WTC11 (cell line): ENCODE measurements at regions of chr9 and their contacts with region 1.

Region 1: DNA sequence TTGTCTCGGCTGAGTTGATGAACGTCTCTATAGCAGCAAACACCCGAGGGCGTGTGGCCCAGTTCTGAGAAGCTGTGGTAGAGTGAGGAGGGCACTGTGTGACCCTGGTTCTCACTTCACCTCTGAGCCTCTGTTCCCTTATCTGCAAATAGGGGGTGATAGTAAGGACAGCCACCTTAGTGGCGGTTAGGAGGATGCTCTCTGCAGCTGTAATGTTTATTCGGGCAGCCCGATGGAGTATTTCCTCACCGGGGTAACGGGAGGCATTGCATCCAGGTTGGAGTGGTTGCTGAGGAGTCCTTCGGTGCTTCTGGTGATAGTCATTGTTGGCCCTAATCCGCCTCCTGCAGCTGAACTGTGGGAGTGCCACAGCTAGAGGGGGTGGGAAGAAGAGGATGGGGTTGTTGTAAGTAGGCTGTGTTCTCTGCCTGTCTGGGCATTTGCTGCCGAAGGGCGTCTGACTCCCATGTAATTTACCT is 13.9 kb downstream of the PRRC2B start:
- DNase-seq: peak; percentile 67
- ATAC-seq: peak; percentile 68
- H3K4me3 Mint-ChIP-seq: peak overlapping the region; percentile 51
- H3K27ac Mint-ChIP-seq: peak overlapping the region; percentile 99
- H3K4me1 Mint-ChIP-seq: peaks cover 87% of the 10 kb centered on the region
- H3K27me3 Mint-ChIP-seq: no peaks in the 10 kb centered on the region
- CTCF ChIP-seq: no peak

Region 2: GRCh38 chr9:131160416-131161112 is 247.2 kb before region 1 on chr9:
- CTCF ChIA-PET with region 1: no interaction called
- POLR2A ChIA-PET with region 1: no interaction called
- DNase-seq: no peak
- ATAC-seq: no peak
- H3K4me3 Mint-ChIP-seq: no peak overlapping the region
- H3K27ac Mint-ChIP-seq: no peak overlapping the region
- H3K4me1 Mint-ChIP-seq: no peaks in the 10 kb centered on the region
- H3K27me3 Mint-ChIP-seq: no peaks in the 10 kb centered on the region
- CTCF ChIP-seq: no peak

Region 3: DNA sequence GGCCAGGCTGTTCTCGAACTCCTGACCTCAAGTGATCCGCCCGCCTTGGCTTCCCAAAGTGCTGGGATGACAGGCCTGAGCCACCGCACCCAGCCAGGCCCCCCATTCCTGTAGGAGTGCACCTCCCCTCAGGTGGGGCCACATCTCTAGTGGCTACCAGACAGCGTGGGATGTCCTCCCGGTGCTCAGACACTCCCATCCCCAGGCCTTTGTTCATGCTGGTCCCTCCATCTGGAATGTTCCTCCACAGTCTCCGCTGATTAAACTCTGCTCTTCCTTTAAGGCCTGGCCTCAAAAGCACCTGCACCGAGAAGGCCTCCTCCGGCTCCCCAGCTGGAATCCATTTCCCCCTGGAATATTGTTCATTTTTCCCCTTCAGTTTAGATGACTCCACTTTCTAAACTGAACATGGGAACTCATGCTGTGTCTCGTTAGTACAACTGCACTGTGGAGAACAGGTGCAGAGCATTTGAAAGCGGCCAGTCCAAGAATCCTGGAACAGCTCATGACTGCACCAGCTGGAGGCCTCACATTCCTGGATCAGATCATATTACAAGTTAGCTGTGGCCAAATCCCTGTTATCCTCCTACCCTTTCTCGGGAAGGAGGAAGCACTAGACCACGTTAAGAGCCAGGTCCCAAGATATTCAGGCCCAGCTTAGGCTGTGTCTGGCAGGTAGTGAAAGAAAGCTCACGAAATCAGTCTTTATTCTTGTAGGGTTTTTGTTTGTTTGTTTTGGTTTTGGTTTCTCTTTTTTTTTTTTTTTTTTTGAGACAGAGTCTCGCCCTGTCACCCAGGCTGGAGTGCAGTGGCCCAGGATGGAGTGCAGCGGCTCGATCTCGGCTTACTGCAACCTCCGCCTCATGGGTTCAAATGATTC is 24.7 kb before region 1 on chr9:
- CTCF ChIA-PET with region 1: interaction called, 10 read pairs
- POLR2A ChIA-PET with region 1: interaction called, 3 read pairs
- DNase-seq: peak; percentile 68
- ATAC-seq: peak; percentile 97
- H3K4me3 Mint-ChIP-seq: peak overlapping the region; percentile 18
- H3K27ac Mint-ChIP-seq: peak overlapping the region; percentile 97
- H3K4me1 Mint-ChIP-seq: peaks cover 29% of the 10 kb centered on the region
- H3K27me3 Mint-ChIP-seq: no peaks in the 10 kb centered on the region
- CTCF ChIP-seq: no peak

Region 4: DNA sequence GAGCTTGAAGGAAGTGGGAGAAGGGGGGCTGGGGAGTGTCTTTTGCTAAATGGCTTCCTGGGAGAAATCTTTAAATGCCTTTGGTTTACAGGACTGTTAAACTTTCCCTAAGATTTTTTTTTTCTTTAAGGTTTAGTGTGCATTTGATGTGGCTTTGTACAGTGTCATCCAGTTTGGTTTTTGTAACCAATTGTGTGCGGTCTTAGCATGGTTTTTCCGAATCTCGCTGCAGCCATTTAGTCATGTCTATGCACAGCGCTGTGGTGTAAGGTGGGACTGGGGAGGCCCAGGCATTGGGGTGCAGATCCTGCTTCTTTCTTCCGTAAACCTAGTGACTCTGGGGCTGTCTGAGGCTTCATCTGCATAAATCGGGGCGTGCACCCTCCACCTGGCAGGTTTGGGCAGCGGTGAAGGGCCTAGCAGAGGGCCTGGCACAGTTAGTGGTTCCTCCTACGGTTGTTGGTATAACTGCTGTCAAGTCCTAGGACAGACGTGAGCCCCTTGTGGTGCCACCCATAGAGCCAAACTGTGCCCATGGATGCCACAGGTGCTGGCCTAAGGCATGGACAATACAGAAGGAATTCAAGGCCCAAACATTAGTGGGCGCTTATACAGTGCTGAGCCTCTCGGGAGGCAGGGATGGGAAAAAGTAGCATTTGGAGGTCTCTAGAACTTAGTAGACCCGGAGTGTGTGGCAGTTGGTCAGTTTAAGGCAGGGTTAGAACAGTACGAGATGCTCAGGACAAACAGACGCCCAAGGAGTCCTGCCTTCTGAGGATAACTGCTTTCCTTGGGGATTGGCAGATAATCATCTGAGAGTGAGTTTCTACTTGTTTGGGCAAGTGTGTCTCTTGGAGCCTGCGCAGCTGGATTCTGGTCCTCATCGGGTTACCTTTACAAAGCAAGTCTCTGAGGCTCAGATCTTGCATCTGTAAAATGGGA is 12.3 kb before region 1 on chr9:
- CTCF ChIA-PET with region 1: interaction called, 15 read pairs
- POLR2A ChIA-PET with region 1: interaction called, 10 read pairs
- DNase-seq: peak; percentile 60
- ATAC-seq: peak; percentile 9
- H3K4me3 Mint-ChIP-seq: peak overlapping the region; percentile 92
- H3K27ac Mint-ChIP-seq: peak overlapping the region; percentile 96
- H3K4me1 Mint-ChIP-seq: peaks cover 66% of the 10 kb centered on the region
- H3K27me3 Mint-ChIP-seq: no peaks in the 10 kb centered on the region
- CTCF ChIP-seq: no peak

Region 5: DNA sequence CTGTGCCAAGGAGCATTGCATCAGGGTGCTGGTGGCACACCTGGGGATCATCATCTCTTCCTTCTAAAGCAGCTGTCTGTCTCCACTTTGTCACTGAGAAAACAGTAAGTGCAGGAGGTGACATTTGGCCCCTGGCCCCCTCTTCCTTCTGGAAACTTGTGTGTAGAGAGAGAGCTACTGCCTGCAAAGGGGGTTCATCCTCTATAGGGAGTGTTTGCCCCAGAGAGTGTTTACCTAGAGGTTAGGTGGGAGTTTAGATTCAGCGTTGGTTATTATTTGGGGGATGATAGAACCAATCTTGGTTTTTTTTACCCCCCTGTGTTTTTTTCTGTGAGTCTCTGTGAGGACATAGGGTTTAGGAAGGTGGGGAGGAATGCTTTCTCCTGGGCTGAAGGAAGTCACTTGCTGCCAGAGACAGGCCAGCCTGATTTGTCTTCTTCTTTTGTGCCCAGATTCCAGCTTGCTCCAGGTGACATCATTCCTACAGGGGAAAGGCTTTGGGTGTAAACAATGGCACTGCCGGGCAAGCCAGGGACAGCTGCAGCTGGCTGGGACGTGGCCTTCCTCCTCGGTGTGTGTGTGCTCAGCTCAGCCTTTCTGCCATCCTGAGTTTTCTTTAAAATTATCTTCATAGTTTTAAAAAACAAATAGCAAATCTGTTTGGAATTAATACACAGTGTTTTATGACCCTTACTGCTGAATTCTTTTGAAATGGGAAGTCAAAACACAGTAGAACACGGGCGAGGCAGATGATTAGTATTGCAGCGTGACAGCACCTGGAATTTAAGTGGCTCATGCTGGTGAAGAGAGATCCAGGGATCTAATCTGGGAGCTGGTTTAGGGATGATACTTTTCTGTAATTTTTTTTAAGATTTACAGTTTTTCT is 10.6 kb after region 1 on chr9:
- CTCF ChIA-PET with region 1: interaction called, 4 read pairs
- POLR2A ChIA-PET with region 1: interaction called, 10 read pairs
- DNase-seq: no peak
- ATAC-seq: peak; percentile 6; the same call in 1 of the 2 replicates
- H3K4me3 Mint-ChIP-seq: no peak overlapping the region
- H3K27ac Mint-ChIP-seq: peak overlapping the region; percentile 96
- H3K4me1 Mint-ChIP-seq: peaks cover 78% of the 10 kb centered on the region
- H3K27me3 Mint-ChIP-seq: no peaks in the 10 kb centered on the region
- CTCF ChIP-seq: no peak